ENCODE measurements at regions of chr15 and their contacts with region 1.

Region 1: GRCh38 chr15:24017465-24017864 is 330.4 kb upstream of the NDN start:
- DNase-seq: no peak
- ATAC-seq: no peak
- H3K4me3 ChIP-seq: no peak overlapping the region
- H3K27ac ChIP-seq: no peak overlapping the region
- H3K4me1 ChIP-seq: no peaks in the 10 kb centered on the region
- H3K27me3 ChIP-seq: no peaks in the 10 kb centered on the region
- CTCF ChIP-seq: no peak
- POLR2A ChIP-seq: no peak

Region 2: DNA sequence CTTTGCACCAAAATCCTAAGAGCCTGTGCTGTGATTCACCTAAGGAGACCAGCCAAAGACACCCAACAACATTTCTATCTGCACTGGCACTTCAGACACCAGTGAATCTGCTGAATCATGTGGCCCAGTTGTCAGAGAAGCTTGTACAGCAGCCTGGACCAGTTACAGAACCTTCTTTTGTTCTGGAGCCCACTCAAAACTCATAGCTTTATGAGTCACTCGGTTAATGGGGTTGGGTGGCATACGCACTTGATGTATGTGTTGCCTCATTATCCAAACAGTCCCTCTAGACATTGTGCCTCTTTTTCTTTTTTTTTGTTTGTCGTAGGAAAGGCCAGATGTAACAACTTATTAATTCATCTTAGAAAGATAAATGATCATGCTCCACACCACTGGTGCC is 544.8 kb before region 1 on chr15:
- intact Hi-C with region 1: no loop called
- DNase-seq: no peak
- ATAC-seq: no peak
- H3K4me3 ChIP-seq: no peak overlapping the region
- H3K27ac ChIP-seq: no peak overlapping the region
- H3K4me1 ChIP-seq: no peaks in the 10 kb centered on the region
- H3K27me3 ChIP-seq: peaks cover 0 to 3% (median 0%) of the 10 kb centered on the region in 9 donors
- CTCF ChIP-seq: no peak
- POLR2A ChIP-seq: no peak

Region 3: DNA sequence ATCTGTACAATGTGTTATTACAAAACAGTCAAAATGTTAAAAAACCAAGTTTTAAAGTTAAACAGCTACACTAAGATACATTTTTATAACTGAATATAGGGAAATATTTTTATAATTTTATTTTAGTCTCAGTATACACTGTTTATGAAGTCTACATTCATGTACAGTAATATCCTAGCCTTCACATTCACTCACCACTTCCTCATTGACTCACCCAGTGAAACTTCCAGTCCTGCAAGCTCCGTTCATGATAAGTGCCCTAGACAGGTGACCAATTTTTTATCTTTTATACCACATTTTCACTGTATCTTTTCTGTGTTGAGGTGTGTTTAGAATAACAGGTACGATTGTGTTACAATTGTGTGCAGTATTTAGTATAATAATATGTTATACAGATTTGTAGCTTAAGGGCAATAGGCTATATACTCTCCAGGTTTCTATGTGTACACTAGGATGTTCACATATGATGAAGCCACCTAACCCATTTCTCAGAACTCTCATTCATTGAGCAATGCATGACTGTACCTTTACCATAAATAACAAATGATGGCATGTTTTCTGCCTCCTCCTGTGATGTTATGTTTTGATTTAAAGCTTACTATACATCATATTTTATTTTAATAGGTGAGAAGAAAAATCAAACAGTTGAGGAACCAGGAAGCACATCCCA is 58.1 kb after region 1 on chr15:
- intact Hi-C with region 1: loop called in 1 of 10 experiments (anchors 10 kb)
- DNase-seq: no peak
- ATAC-seq: no peak
- H3K4me3 ChIP-seq: no peak overlapping the region
- H3K27ac ChIP-seq: no peak overlapping the region
- H3K4me1 ChIP-seq: no peaks in the 10 kb centered on the region
- H3K27me3 ChIP-seq: no peaks in the 10 kb centered on the region
- CTCF ChIP-seq: no peak
- POLR2A ChIP-seq: no peak

Measured in heart left ventricle (tissue), 16 donors.